ENCODE measurements at regions of chr21 and their contacts with region 1.

Region 1: DNA sequence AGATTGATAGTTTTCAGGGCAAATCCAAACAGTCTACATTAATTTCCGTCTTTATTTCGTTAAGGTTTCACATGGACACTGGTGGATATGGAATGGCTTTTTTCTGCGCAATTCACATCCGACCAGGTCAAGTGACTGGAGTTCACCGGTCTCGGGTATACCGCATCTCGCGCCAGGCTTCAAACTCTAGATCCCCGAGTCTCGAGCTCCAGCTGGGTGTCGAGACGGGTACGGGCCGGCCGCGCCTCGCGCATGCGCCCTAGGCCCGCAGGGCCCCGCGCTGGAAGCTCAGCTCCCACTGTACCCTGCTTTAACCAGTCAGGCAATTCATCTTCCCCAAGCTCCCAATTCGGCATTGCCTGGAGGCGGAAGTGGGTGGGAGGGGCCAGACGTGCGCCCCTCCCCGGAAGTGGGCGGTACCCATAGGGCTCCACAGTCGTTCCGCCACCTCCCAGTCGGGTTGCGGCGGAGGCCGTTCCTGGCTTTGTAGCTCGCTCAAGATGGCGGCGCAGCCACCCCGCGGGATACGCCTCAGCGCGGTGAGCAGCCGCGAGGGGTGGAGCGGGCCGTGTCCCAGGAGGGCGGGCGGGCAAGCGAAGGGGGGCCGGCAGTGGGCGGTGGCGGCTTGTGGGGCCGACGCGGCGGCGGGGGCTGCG is at the start of gene MORC3:
- DNase-seq: peak; percentile 97
- H3K4me3 ChIP-seq: peak within 1 kb of the TSS; percentile 88 to 91
- H3K27ac ChIP-seq: peak within 1 kb of the TSS; percentile 98
- H3K4me1 ChIP-seq: peaks cover 4% of the 10 kb centered on the region
- H3K27me3 ChIP-seq: no peaks in the 10 kb centered on the region
- CTCF ChIP-seq: peak in 2 of 4 experiments; percentile 17 to 38
- POLR2A ChIP-seq: peak; percentile 98
- total RNA-seq, gene MORC3: 34.8 to 42.0 TPM

Region 2: DNA sequence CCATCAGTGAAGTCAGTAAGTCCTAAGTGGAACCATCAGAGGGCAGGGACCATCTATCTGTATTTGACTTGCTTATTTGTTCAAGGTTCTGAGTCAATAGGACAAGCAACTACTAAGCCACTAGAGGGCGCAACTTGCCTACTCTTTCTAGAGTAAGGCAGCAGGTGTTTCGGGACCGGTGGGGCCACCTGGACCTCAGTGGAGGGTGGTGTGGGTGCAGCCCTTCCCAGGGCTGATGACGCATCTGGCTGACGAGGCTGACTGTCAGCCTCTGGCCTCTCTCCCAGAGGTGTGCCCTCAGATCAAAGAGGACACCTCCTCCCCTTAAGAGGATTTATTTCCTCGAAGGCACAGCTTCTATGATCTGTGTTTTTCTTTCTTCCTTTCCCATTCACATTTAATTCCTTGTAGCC is 178.4 kb before region 1 on chr21:
- intact Hi-C with region 1: loop called (anchors 5 kb)
- DNase-seq: peak; percentile 99
- H3K4me3 ChIP-seq: no peak overlapping the region
- H3K27ac ChIP-seq: peak overlapping the region; percentile 69 to 80
- H3K4me1 ChIP-seq: no peaks in the 10 kb centered on the region
- H3K27me3 ChIP-seq: no peaks in the 10 kb centered on the region
- CTCF ChIP-seq: peak; percentile 53 to 96 (median 94)
- POLR2A ChIP-seq: peak; percentile 10

Region 3: GRCh38 chr21:36156339-36156814 is 163.5 kb before region 1 on chr21:
- intact Hi-C with region 1: loop called (anchors 2 kb)
- DNase-seq: peak; percentile 100
- H3K4me3 ChIP-seq: peak overlapping the region; percentile 95 to 98
- H3K27ac ChIP-seq: peak overlapping the region; percentile 86 to 93
- H3K4me1 ChIP-seq: no peaks in the 10 kb centered on the region
- H3K27me3 ChIP-seq: no peaks in the 10 kb centered on the region
- CTCF ChIP-seq: no peak
- POLR2A ChIP-seq: no peak

Region 4: DNA sequence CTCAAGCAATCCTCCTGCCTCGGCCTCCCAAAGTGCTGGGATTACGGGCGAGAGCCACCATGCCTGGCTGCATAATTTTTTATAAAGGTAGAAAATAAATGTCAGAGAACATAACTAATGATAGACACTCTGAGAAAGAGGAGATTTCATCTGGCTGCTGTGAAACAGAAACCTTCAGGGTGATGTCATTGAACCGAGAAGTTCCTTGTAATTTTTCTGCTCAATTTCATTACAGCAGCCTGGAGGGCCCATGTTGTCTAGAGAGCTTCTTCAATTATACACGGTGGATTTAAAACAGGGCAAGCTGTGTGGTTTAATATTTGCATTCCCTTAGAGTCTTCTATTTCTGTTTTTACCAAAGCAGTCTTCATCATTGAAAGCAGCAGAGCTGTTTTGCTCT is 64.2 kb before region 1 on chr21:
- intact Hi-C with region 1: loop called (anchors 10 kb)
- DNase-seq: no peak
- H3K4me3 ChIP-seq: no peak overlapping the region
- H3K27ac ChIP-seq: no peak overlapping the region
- H3K4me1 ChIP-seq: no peaks in the 10 kb centered on the region
- H3K27me3 ChIP-seq: no peaks in the 10 kb centered on the region
- CTCF ChIP-seq: no peak
- POLR2A ChIP-seq: no peak

Region 5: DNA sequence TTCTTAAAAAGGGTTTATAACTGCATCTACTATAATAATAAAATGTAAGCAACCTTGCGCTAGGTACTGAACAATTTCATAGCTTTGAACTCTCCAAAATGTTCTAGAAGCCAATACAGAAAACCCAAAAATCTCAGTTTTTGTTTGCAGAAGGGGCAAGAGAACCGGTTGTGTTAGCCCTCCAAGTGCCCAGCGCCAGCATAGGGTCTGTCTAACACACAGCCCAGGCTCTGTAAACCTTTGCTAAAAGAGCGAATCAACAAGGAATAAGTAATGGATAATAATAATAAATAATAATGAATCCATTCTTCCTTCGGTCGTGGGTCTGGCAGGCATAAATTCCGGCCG is 65.0 kb after region 1 on chr21:
- intact Hi-C with region 1: loop called (anchors 5 kb)
- DNase-seq: no peak
- H3K4me3 ChIP-seq: peak overlapping the region; percentile 58 to 64
- H3K27ac ChIP-seq: no peak overlapping the region
- H3K4me1 ChIP-seq: no peaks in the 10 kb centered on the region
- H3K27me3 ChIP-seq: no peaks in the 10 kb centered on the region
- CTCF ChIP-seq: no peak
- POLR2A ChIP-seq: no peak

Region 6: GRCh38 chr21:36860736-36861594 is 541.1 kb after region 1 on chr21:
- intact Hi-C with region 1: no loop called
- DNase-seq: no peak
- H3K4me3 ChIP-seq: no peak overlapping the region
- H3K27ac ChIP-seq: no peak overlapping the region
- H3K4me1 ChIP-seq: no peaks in the 10 kb centered on the region
- H3K27me3 ChIP-seq: no peaks in the 10 kb centered on the region
- CTCF ChIP-seq: no peak
- POLR2A ChIP-seq: no peak